AG04449 (cell line): ENCODE measurements at regions of chr10 and their contacts with region 1.

Region 1: GRCh38 chr10:78934532-78934898 is 134.3 kb upstream of the ZMIZ1 start:
- DNase-seq: no peak
- H3K4me3 ChIP-seq: no peak overlapping the region
- CTCF ChIP-seq: no peak

Region 2: DNA sequence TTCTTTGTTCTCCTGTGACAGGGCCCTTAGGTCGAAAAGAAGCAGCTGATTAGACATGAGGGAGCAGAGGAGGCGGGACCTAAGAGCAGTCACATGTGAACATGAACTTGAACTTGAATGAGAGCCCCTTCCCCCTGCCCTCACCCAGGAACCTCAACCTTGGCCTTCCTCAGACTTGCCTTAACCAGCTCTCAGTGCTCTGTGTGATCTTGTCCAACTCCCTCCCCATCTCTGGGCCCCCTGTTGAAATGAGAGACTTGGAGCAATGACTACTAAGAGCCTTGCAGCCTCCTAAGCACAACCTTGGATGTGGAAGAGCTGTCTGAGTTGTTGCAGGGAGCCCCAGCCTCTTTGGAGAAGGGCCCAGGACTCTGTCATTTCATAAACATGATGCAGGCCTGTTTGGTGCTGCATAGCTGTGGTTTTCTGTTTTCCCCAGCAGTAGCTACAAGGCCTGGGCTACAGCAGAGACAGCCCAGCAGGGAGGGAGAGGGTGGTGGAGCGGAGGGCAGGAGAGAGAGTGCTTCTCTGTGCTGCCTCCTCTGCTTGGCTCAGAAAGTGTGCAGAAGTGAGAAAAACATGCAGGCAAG is 10.3 kb after region 1 on chr10:
- CTCF ChIA-PET with region 1: interaction called, 36 read pairs
- POLR2A ChIA-PET with region 1: no interaction called
- DNase-seq: peak; percentile 88
- H3K4me3 ChIP-seq: no peak overlapping the region
- CTCF ChIP-seq: peak; percentile 39